ENCODE measurements at regions of chr9 and their contacts with region 1.

Region 1: GRCh38 chr9:98168941-98169488 is 23.4 kb downstream of the CORO2A start:
- DNase-seq: peak; percentile 67 to 89 (median 80)
- ATAC-seq: peak; percentile 98
- H3K4me3 ChIP-seq: no peak overlapping the region
- H3K27ac ChIP-seq: no peak overlapping the region; the same call in 2 of the 3 replicates
- H3K4me1 ChIP-seq: peaks cover 25 to 31% of the 10 kb centered on the region in 2 experiments
- H3K27me3 ChIP-seq: no peaks in the 10 kb centered on the region
- CTCF ChIP-seq: no peak
- EP300 ChIP-seq: peak; percentile 69; the same call in 1 of the 2 replicates
- POLR2A ChIP-seq: no peak
- RAD21 ChIP-seq: no peak

Region 2: GRCh38 chr9:98142182-98142907 is 26.7 kb before region 1 on chr9:
- CTCF ChIA-PET with region 1: no interaction called
- POLR2A ChIA-PET with region 1: no interaction called
- in situ Hi-C with region 1: no loop called
- intact Hi-C with region 1: no loop called
- DNase-seq: no peak
- ATAC-seq: peak; percentile 66
- H3K4me3 ChIP-seq: no peak overlapping the region
- H3K27ac ChIP-seq: no peak overlapping the region
- H3K4me1 ChIP-seq: peaks cover 0 to 10% of the 10 kb centered on the region in 2 experiments; a peak in 3 of 5 replicates
- H3K27me3 ChIP-seq: no peaks in the 10 kb centered on the region
- CTCF ChIP-seq: no peak
- EP300 ChIP-seq: no peak
- POLR2A ChIP-seq: no peak
- RAD21 ChIP-seq: no peak

Region 3: GRCh38 chr9:98192503-98193335 is 23.7 kb after region 1 on chr9 and contains the start of gene CORO2A:
- CTCF ChIA-PET with region 1: no interaction called
- POLR2A ChIA-PET with region 1: no interaction called
- in situ Hi-C with region 1: no loop called
- intact Hi-C with region 1: loop called (anchors 2 kb)
- DNase-seq: peak; percentile 90 to 97 (median 96)
- ATAC-seq: peak; percentile 88
- H3K4me3 ChIP-seq: peak within 1 kb of the TSS; percentile 85
- H3K27ac ChIP-seq: peak within 1 kb of the TSS; percentile 60
- H3K4me1 ChIP-seq: peaks cover 28 to 31% of the 10 kb centered on the region in 2 experiments; a peak in 4 of 5 replicates
- H3K27me3 ChIP-seq: no peaks in the 10 kb centered on the region
- CTCF ChIP-seq: peak; percentile 79 to 84 (median 82)
- EP300 ChIP-seq: no peak
- POLR2A ChIP-seq: peak; percentile 79
- RAD21 ChIP-seq: peak; percentile 63 to 70
- polyA plus RNA-seq, gene CORO2A: 9.5 to 12.2 TPM

Region 4: DNA sequence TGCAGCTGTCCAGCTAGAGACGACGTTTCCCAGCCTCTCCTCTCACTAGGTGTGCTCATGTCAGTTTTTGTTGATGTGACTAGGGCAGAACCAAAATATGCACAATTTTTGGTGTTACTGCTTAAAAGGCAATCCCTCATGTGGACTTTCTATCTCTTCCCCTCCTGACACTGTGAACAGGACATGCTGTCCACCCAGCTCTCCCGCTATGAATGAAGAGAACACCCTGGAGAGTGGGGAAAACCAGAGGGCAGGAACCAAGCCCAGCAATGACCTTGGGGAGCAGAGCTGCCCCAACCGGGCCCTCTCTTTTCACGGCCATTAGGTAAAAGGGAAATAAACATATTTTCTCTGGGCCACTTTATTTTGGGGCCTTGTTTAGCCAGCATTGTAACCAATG is 133.1 kb after region 1 on chr9:
- CTCF ChIA-PET with region 1: no interaction called
- POLR2A ChIA-PET with region 1: no interaction called
- in situ Hi-C with region 1: no loop called
- intact Hi-C with region 1: no loop called
- DNase-seq: no peak
- ATAC-seq: no peak
- H3K4me3 ChIP-seq: no peak overlapping the region
- H3K27ac ChIP-seq: no peak overlapping the region
- H3K4me1 ChIP-seq: peaks cover 13 to 24% of the 10 kb centered on the region in 2 experiments
- H3K27me3 ChIP-seq: no peaks in the 10 kb centered on the region
- CTCF ChIP-seq: no peak
- EP300 ChIP-seq: no peak
- POLR2A ChIP-seq: no peak
- RAD21 ChIP-seq: no peak

Region 5: DNA sequence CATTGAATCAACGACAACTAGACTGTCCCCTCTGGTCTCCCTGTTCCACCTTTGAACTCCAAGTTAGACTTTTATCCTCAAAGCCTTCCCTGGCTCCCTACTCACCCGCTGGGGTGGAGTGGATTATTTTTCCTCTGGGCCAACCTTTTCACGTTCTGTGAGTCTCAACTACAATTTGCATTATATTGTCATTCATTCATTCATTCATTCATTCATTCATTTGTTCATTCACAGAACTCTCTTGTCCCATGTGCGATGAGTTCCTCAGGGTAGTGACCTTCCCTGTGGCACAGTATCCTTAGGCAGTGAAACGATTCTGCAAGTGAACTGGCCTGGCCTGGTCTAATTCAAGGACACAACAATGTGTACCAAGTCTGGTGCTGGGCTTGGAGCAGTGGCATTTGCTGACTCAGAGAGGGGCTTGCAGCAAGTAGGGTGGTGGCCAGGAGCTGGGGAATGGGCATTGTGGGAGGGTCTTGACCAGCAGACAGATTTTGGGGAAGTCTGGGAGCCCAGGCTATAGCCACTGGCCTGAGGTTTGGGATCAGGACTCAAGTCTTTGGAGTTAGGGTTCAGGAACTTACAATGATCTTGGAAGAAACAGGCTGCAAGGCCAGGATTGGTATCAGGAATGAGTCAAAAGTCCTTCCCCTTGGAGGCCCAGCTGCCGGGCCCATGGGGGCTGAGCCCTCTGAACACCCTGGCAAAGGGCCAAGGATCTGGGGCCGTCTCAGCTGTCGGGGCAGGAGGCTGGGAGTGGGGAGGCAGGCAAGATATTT is 737.4 kb after region 1 on chr9:
- CTCF ChIA-PET with region 1: no interaction called
- POLR2A ChIA-PET with region 1: no interaction called
- in situ Hi-C with region 1: no loop called
- intact Hi-C with region 1: loop called (anchors 5 kb)
- DNase-seq: peak; percentile 63 to 84 (median 68)
- ATAC-seq: peak; percentile 68
- H3K4me3 ChIP-seq: no peak overlapping the region
- H3K27ac ChIP-seq: no peak overlapping the region
- H3K4me1 ChIP-seq: peaks cover 7 to 39% of the 10 kb centered on the region in 2 experiments
- H3K27me3 ChIP-seq: no peaks in the 10 kb centered on the region
- CTCF ChIP-seq: no peak
- EP300 ChIP-seq: no peak
- POLR2A ChIP-seq: no peak
- RAD21 ChIP-seq: no peak

Measured in K562 (cell line).